Activated CD4-positive, alpha-beta memory T cell treated with anti-CD3 and anti-CD28 coated beads for 36 hours (primary cell): ENCODE measurements at regions of chr13 and their contacts with region 1.

Region 1: GRCh38 chr13:74133657-74134201 is 475 bp downstream of the KLF12 start:
- DNase-seq: peak; percentile 91
- H3K4me3 Mint-ChIP-seq: peak overlapping the region; percentile 100
- H3K27ac Mint-ChIP-seq: peak overlapping the region; percentile 100
- H3K4me1 Mint-ChIP-seq: peaks cover 30% of the 10 kb centered on the region
- H3K27me3 Mint-ChIP-seq: peaks cover 1% of the 10 kb centered on the region

Region 2: GRCh38 chr13:73058736-73059459 is 1074.8 kb before region 1 on chr13 and contains the start of gene KLF5:
- CTCF ChIA-PET with region 1: no interaction called
- POLR2A ChIA-PET with region 1: no interaction called
- intact Hi-C with region 1: loop called (anchors 5 kb)
- DNase-seq: peak; percentile 97
- H3K4me3 Mint-ChIP-seq: peak within 1 kb of the TSS; percentile 75
- H3K27ac Mint-ChIP-seq: no peak within 1 kb of the TSS
- H3K4me1 Mint-ChIP-seq: peaks cover 17% of the 10 kb centered on the region
- H3K27me3 Mint-ChIP-seq: peaks cover 16% of the 10 kb centered on the region
- total RNA-seq, gene KLF5: 3.3 to 4.2 TPM

Region 3: DNA sequence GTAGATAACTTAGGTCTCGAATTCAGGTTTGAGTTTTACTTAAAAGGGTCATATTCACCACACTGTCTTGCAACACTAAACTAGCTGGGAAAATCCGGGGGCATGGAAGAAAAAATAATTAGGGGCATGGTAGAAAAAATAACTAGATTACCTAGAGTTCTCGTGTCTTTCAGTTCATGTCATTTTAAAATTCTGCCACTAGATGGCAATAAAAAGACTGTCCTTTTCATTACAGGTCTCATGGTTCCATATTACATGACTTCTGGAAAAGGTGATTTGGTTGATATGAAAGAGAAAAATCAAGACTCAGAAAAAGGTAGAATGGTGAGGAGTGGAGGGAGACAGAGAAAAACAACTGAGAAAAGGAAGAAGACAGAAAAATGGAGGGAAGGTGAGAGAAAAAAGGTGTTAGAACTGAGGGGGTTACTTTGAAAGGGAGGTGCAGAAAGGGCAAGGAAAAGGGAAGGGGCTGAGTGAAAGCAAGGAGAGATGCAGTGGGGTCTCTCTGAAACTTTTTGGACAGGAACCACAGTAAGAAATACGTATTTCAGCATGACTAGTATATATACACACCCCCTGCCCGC is 298.5 kb before region 1 on chr13:
- CTCF ChIA-PET with region 1: interaction called, 3 read pairs
- POLR2A ChIA-PET with region 1: no interaction called
- intact Hi-C with region 1: loop called (anchors 2 kb)
- DNase-seq: no peak
- H3K4me3 Mint-ChIP-seq: no peak overlapping the region
- H3K27ac Mint-ChIP-seq: no peak overlapping the region
- H3K4me1 Mint-ChIP-seq: peaks cover 37% of the 10 kb centered on the region
- H3K27me3 Mint-ChIP-seq: no peaks in the 10 kb centered on the region

Region 4: DNA sequence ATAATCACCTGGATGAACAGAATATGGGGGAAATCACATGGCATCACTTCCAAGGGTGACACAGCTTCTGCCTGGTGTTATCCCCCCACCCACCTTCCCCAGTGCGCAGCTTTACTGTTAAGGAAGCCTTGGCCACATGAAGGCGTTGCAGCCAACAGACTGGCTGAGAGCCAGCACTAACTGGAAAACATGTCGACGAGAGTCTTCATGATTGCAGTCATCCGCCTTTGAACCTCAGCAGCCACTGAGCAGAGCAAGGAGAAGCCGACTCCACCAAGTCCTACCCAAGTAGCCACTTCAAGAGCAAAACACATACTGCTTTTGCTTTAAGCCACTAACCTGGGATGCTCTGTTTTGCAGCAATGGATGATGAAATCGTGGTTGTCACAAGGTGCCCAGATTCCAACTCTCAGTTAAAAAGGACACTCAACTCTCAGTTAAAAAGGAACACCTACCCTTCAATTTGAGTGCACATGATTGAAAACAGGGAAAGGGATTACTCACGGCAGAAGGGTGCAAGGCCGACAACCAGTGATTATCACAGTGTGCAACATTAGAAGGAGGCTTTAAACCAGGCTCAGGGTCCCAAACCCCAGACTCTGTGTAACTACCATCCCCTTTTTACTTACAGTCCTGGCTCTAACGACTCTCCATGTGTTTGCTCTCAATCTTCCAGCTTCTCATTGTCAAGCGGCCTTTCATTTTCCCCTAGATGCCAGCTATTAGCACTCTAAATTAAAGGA is 148.6 kb before region 1 on chr13:
- CTCF ChIA-PET with region 1: interaction called, 3 read pairs
- POLR2A ChIA-PET with region 1: interaction called, 14 read pairs
- intact Hi-C with region 1: loop called (anchors 1 kb)
- DNase-seq: peak; percentile 89
- H3K4me3 Mint-ChIP-seq: peak overlapping the region; percentile 63
- H3K27ac Mint-ChIP-seq: peak overlapping the region; percentile 90
- H3K4me1 Mint-ChIP-seq: peaks cover 46% of the 10 kb centered on the region
- H3K27me3 Mint-ChIP-seq: no peaks in the 10 kb centered on the region

Region 5: DNA sequence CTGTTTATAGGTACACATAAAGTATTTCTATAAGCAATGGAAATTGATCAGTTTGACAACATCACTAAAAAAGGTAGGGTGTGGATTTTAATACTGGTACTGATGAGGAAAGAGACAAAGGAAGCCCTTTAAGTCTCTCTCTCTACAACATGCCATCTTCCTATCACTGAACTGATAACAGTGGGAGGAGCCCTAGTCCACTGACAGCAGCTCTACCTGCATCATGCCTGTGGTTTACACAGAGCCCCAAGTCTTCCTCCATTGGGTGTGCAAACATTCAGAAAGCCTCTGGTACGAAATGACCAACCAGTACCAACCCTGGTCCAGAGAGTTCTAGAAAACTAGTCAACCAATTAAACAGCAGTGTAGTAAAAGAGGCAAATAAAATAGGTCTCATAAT is 53.0 kb before region 1 on chr13:
- CTCF ChIA-PET with region 1: no interaction called
- POLR2A ChIA-PET with region 1: no interaction called
- intact Hi-C with region 1: no loop called
- DNase-seq: no peak
- H3K4me3 Mint-ChIP-seq: no peak overlapping the region
- H3K27ac Mint-ChIP-seq: peak overlapping the region; percentile 38
- H3K4me1 Mint-ChIP-seq: peaks cover 62% of the 10 kb centered on the region
- H3K27me3 Mint-ChIP-seq: no peaks in the 10 kb centered on the region

Region 6: GRCh38 chr13:74230984-74231501 is 97.3 kb after region 1 on chr13:
- CTCF ChIA-PET with region 1: no interaction called
- POLR2A ChIA-PET with region 1: interaction called, 6 read pairs
- intact Hi-C with region 1: loop called (anchors 1 kb)
- DNase-seq: no peak
- H3K4me3 Mint-ChIP-seq: peak overlapping the region; percentile 31
- H3K27ac Mint-ChIP-seq: peak overlapping the region; percentile 88
- H3K4me1 Mint-ChIP-seq: peaks cover 45% of the 10 kb centered on the region
- H3K27me3 Mint-ChIP-seq: no peaks in the 10 kb centered on the region

Region 7: GRCh38 chr13:75326173-75327134 is 1192.7 kb after region 1 on chr13:
- CTCF ChIA-PET with region 1: no interaction called
- POLR2A ChIA-PET with region 1: no interaction called
- intact Hi-C with region 1: loop called (anchors 5 kb)
- DNase-seq: peak; percentile 78
- H3K4me3 Mint-ChIP-seq: peak overlapping the region; percentile 89
- H3K27ac Mint-ChIP-seq: peak overlapping the region; percentile 95
- H3K4me1 Mint-ChIP-seq: peaks cover 35% of the 10 kb centered on the region
- H3K27me3 Mint-ChIP-seq: no peaks in the 10 kb centered on the region